ENCODE measurements at regions of chr15 and their contacts with region 1.

Region 1: GRCh38 chr15:93030430-93031105 is 58.4 kb downstream of the RGMA start:
- DNase-seq: peak; percentile 82
- H3K4me3 ChIP-seq: no peak overlapping the region
- H3K27ac ChIP-seq: peak overlapping the region in 1 of 2 donors; percentile 41
- H3K4me1 ChIP-seq: peaks cover 31% of the 10 kb centered on the region
- H3K27me3 ChIP-seq: no peaks in the 10 kb centered on the region
- CTCF ChIP-seq: peak; percentile 74 to 82 (median 81)
- POLR2A ChIP-seq: no peak

Region 2: GRCh38 chr15:93974804-93975481 is 944.4 kb after region 1 on chr15:
- intact Hi-C with region 1: loop called (anchors 10 kb)
- DNase-seq: peak; percentile 50
- H3K4me3 ChIP-seq: no peak overlapping the region
- H3K27ac ChIP-seq: no peak overlapping the region
- H3K4me1 ChIP-seq: no peaks in the 10 kb centered on the region
- H3K27me3 ChIP-seq: no peaks in the 10 kb centered on the region
- CTCF ChIP-seq: peak in 2 of 3 experiments; percentile 21 to 41
- POLR2A ChIP-seq: no peak

Region 3: GRCh38 chr15:94119923-94120775 is 1089.6 kb after region 1 on chr15:
- intact Hi-C with region 1: loop called (anchors 10 kb)
- DNase-seq: peak; percentile 82
- H3K4me3 ChIP-seq: no peak overlapping the region
- H3K27ac ChIP-seq: peak overlapping the region in 1 of 2 donors; percentile 34
- H3K4me1 ChIP-seq: no peaks in the 10 kb centered on the region
- H3K27me3 ChIP-seq: no peaks in the 10 kb centered on the region
- CTCF ChIP-seq: peak; percentile 79 to 95 (median 94)
- POLR2A ChIP-seq: no peak